ENCODE measurements at regions of chr12 and their contacts with region 1.

Region 1: GRCh38 chr12:19186722-19187661 is 57.5 kb downstream of the PLEKHA5 start:
- DNase-seq: peak; percentile 57
- H3K4me3 ChIP-seq: no peak overlapping the region
- H3K27ac ChIP-seq: no peak overlapping the region
- H3K4me1 ChIP-seq: no peaks in the 10 kb centered on the region
- H3K27me3 ChIP-seq: no peaks in the 10 kb centered on the region
- CTCF ChIP-seq: peak; percentile 73

Region 2: GRCh38 chr12:18250313-18250916 is 936.6 kb before region 1 on chr12:
- CTCF ChIA-PET with region 1: interaction called, 3 read pairs
- POLR2A ChIA-PET with region 1: no interaction called
- intact Hi-C with region 1: loop called (anchors 5 kb)
- DNase-seq: peak; percentile 79
- H3K4me3 ChIP-seq: no peak overlapping the region
- H3K27ac ChIP-seq: no peak overlapping the region
- H3K4me1 ChIP-seq: peaks cover 2% of the 10 kb centered on the region
- H3K27me3 ChIP-seq: no peaks in the 10 kb centered on the region
- CTCF ChIP-seq: peak; percentile 79

Region 3: DNA sequence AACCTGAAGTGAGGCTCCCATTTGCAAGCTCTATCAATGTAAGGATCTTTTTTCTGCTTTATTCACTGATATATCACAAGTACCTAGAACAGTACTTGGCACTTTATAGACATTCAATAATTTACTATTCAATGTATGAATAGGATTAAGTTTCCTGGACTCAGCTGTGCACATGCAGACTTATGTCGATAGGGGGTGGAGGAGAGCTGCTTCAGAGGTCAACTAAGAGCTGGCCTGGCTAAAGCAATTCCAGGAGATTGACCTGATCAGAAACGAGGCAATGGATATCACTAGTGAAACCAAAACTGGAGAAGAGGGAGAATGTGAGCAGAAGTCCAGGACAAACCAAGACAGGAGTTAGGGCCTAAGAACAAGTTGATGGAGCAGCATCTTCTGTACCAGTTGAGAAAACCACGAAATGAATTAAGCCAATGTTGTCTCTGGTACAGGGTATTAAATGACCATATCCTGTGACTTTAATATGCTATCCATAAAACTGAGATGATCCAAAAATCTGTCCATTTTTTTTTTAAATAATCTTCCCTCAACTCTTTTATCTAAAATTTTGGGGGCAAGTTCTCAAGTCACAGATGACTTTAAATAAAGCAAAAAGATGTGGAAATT is 756.5 kb before region 1 on chr12:
- CTCF ChIA-PET with region 1: interaction called, 3 read pairs
- POLR2A ChIA-PET with region 1: no interaction called
- intact Hi-C with region 1: loop called (anchors 10 kb)
- DNase-seq: peak; percentile 27
- H3K4me3 ChIP-seq: no peak overlapping the region
- H3K27ac ChIP-seq: no peak overlapping the region
- H3K4me1 ChIP-seq: no peaks in the 10 kb centered on the region
- H3K27me3 ChIP-seq: no peaks in the 10 kb centered on the region
- CTCF ChIP-seq: peak; percentile 69

Region 4: DNA sequence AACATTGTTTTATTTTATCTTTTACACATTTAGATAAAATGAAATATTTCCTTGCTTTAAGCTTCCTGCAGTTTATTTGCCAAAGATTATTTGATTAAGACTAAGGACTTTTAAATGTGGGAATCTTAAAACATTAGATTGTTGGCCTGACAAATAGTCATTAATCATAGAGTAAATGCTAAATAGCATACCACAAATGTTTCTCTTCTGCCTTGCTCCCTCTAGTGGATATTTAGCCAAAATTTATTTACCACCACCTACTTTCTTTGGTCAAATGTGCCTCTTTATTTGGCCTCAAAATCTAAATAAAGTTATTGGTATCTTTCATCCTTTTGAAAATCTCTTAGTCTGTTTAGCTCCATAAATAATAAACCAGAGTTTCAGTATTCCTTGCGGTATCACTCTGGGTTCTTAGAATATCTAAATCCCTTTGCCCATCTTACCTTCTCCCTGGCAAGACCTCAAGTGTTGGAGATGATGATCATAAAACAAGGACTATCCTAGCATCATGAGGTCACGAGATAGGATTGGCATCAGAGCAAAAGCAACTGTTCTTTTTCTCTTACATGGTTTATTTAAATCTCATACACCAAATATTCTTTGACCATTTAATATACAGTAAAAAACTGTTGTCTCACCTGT is 101.7 kb after region 1 on chr12:
- CTCF ChIA-PET with region 1: interaction called, 3 read pairs
- POLR2A ChIA-PET with region 1: no interaction called
- intact Hi-C with region 1: loop called (anchors 5 kb)
- DNase-seq: peak; percentile 66
- H3K4me3 ChIP-seq: no peak overlapping the region
- H3K27ac ChIP-seq: no peak overlapping the region
- H3K4me1 ChIP-seq: no peaks in the 10 kb centered on the region
- H3K27me3 ChIP-seq: no peaks in the 10 kb centered on the region
- CTCF ChIP-seq: peak; percentile 74

Measured in A673 (cell line).